RWPE1 (cell line): ENCODE measurements at regions of chr2 and their contacts with region 1.

Region 1: DNA sequence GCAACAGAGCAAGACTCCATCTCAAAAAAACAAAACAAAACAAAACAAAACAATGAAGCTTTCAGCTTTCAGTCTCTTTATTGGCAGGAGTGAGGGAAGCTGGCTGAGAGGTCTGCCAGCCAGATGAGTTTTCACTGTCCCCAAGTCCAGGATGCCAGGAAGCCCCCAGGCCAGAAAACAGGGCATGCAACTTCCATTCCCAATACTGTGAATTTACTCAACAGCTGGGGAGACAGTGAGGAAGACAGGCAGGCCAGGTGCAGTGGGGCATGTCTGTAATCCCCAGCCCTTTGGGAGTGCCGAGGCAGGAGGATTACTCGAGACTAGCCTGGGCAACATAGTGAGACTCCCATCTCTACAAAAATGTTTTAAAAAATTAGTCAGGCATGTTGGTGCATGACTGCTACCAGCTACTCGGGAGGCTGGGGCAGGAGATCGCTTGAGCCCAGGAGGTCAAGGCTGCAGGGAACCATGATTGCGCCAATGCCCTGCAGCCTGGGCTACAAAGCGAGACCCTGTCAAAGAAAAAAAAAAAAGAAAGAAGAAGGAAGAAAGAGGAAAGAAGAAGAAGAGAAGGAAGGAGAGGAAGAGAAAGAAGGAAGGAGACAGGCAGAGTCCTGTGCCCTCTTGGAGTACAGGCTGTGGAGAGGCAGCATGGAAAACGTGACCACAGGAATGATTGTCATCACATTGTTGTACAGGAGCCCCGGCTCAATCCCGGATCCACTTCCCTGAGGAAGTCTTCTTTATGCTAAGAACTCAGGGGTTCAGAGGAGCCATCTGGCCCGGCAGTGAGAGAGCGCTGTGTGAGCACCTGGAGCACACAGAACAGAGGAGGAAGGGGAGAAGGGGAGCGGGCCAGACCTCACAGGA is 29.2 kb upstream of the POMC start:
- DNase-seq: no peak
- H3K27ac ChIP-seq: no peak overlapping the region
- CTCF ChIP-seq: no peak

Region 2: GRCh38 chr2:24909555-24910177 is 287.9 kb before region 1 on chr2:
- CTCF ChIA-PET with region 1: no interaction called
- POLR2A ChIA-PET with region 1: no interaction called
- DNase-seq: no peak
- H3K27ac ChIP-seq: no peak overlapping the region
- CTCF ChIP-seq: no peak

Region 3: GRCh38 chr2:25165992-25166875 is 31.3 kb before region 1 on chr2:
- CTCF ChIA-PET with region 1: interaction called, 29 read pairs
- POLR2A ChIA-PET with region 1: interaction called, 4 read pairs
- DNase-seq: no peak
- H3K27ac ChIP-seq: no peak overlapping the region
- CTCF ChIP-seq: peak; percentile 23; the same call in 1 of the 2 replicates